ENCODE measurements at regions of chr13 and their contacts with region 1.

Region 1: GRCh38 chr13:108289819-108290218 is 20.3 kb downstream of the TNFSF13B start:
- H3K4me3 Mint-ChIP-seq: no peak overlapping the region
- H3K27ac Mint-ChIP-seq: no peak overlapping the region
- H3K4me1 Mint-ChIP-seq: peaks cover 8% of the 10 kb centered on the region
- H3K27me3 Mint-ChIP-seq: no peaks in the 10 kb centered on the region

Region 2: GRCh38 chr13:107351308-107351707 is 938.5 kb before region 1 on chr13:
- intact Hi-C with region 1: no loop called
- H3K4me3 Mint-ChIP-seq: no peak overlapping the region
- H3K27ac Mint-ChIP-seq: no peak overlapping the region
- H3K4me1 Mint-ChIP-seq: no peaks in the 10 kb centered on the region
- H3K27me3 Mint-ChIP-seq: no peaks in the 10 kb centered on the region

Region 3: GRCh38 chr13:108070491-108070890 is 219.3 kb before region 1 on chr13:
- intact Hi-C with region 1: no loop called
- H3K4me3 Mint-ChIP-seq: no peak overlapping the region
- H3K27ac Mint-ChIP-seq: no peak overlapping the region
- H3K4me1 Mint-ChIP-seq: no peaks in the 10 kb centered on the region
- H3K27me3 Mint-ChIP-seq: no peaks in the 10 kb centered on the region

Region 4: DNA sequence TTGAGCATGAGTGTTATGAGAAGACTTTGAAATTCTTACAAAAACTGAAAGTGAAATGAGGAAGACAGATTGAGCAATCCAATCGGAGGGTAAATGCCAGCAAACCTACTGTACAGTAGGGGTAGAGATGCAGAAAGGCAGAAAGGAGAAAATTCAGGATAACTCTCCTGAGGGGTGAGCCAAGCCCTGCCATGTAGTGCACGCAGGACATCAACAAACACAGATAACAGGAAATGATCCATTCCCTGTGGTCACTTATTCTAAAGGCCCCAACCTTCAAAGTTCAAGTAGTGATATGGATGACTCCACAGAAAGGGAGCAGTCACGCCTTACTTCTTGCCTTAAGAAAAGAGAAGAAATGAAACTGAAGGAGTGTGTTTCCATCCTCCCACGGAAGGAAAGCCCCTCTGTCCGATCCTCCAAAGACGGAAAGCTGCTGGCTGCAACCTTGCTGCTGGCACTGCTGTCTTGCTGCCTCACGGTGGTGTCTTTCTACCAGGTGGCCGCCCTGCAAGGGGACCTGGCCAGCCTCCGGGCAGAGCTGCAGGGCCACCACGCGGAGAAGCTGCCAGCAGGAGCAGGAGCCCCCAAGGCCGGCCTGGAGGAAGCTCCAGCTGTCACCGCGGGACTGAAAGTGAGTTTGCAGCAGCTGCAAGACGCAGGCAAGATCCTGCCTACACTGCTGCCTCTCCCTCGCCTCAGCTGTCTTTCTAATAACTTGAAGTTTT is 20.1 kb before region 1 on chr13 and contains the start of gene TNFSF13B:
- intact Hi-C with region 1: no loop called
- H3K4me3 Mint-ChIP-seq: peak within 1 kb of the TSS; percentile 86
- H3K27ac Mint-ChIP-seq: peak within 1 kb of the TSS; percentile 91
- H3K4me1 Mint-ChIP-seq: peaks cover 41% of the 10 kb centered on the region
- H3K27me3 Mint-ChIP-seq: no peaks in the 10 kb centered on the region

Region 5: GRCh38 chr13:108305655-108306054 is 15.8 kb after region 1 on chr13:
- intact Hi-C with region 1: loop called (anchors 2 kb)
- H3K4me3 Mint-ChIP-seq: no peak overlapping the region
- H3K27ac Mint-ChIP-seq: no peak overlapping the region
- H3K4me1 Mint-ChIP-seq: peaks cover 15% of the 10 kb centered on the region
- H3K27me3 Mint-ChIP-seq: no peaks in the 10 kb centered on the region

Region 6: GRCh38 chr13:108915634-108916512 is 626.1 kb after region 1 on chr13:
- intact Hi-C with region 1: no loop called
- H3K4me3 Mint-ChIP-seq: peak overlapping the region; percentile 59
- H3K27ac Mint-ChIP-seq: peak overlapping the region; percentile 47
- H3K4me1 Mint-ChIP-seq: peaks cover 5% of the 10 kb centered on the region
- H3K27me3 Mint-ChIP-seq: no peaks in the 10 kb centered on the region

Measured in dendritic cell treated with granulocyte-macrophage colony-stimulating factor and Interleukin-4, amounts not matched to agents 40 ng/mL and 50 ng/mL, for 4 days (primary cell).